ENCODE measurements at regions of chr6 and their contacts with region 1.

Region 1: GRCh38 chr6:7107578-7108195 is at the start of gene RREB1:
- DNase-seq: peak; percentile 54
- H3K4me3 Mint-ChIP-seq: peak within 1 kb of the TSS; percentile 92
- H3K27ac Mint-ChIP-seq: peak within 1 kb of the TSS; percentile 95
- H3K4me1 Mint-ChIP-seq: peaks cover 43% of the 10 kb centered on the region
- H3K27me3 Mint-ChIP-seq: peaks cover 2% of the 10 kb centered on the region
- total RNA-seq, gene RREB1: 23.1 and 23.6 TPM in 2 replicates

Region 2: DNA sequence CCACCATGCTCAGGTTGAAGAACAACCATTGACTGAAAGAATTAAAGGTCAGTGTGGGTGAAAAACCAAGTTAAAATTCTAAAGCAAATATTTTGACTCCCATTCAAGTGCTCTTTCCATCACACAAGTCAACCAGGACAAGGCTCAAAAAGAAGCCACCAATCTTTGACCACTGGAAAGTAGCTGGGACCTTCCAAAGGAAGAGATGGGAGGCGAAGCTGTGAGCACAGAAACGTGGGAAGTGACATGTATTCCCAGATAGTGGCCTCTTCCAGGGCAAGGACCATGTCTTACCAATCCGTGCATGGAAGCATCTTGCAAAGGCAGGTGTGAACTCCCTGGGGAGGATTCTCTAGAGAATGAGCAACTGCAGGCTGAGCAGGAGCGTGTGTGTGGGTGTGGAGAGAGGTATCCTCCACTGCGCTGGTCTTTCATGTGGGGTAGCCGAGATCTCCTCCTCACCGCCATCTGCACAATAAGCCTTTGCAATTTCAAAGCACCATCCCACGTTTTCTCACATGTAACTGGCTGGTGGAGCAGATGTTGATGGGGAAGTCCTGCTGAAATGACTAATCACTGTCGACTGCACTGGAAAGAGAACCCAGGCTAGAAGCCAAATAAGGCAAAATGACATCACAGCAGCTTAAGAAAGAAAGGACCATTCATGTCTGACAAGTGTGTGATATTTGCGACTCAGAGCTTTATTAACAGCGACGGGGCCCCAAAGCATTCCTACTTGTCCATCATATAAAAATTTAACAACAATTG is 189.3 kb before region 1 on chr6:
- intact Hi-C with region 1: loop called (anchors 1 kb)
- DNase-seq: peak; percentile 24
- H3K4me3 Mint-ChIP-seq: no peak overlapping the region
- H3K27ac Mint-ChIP-seq: peak overlapping the region; percentile 16
- H3K4me1 Mint-ChIP-seq: peaks cover 24% of the 10 kb centered on the region
- H3K27me3 Mint-ChIP-seq: peaks cover 31% of the 10 kb centered on the region

Region 3: GRCh38 chr6:7051233-7052114 is 56.2 kb before region 1 on chr6:
- intact Hi-C with region 1: loop called (anchors 5 kb)
- DNase-seq: no peak
- H3K4me3 Mint-ChIP-seq: no peak overlapping the region
- H3K27ac Mint-ChIP-seq: no peak overlapping the region
- H3K4me1 Mint-ChIP-seq: peaks cover 3% of the 10 kb centered on the region
- H3K27me3 Mint-ChIP-seq: peaks cover 53% of the 10 kb centered on the region

Region 4: DNA sequence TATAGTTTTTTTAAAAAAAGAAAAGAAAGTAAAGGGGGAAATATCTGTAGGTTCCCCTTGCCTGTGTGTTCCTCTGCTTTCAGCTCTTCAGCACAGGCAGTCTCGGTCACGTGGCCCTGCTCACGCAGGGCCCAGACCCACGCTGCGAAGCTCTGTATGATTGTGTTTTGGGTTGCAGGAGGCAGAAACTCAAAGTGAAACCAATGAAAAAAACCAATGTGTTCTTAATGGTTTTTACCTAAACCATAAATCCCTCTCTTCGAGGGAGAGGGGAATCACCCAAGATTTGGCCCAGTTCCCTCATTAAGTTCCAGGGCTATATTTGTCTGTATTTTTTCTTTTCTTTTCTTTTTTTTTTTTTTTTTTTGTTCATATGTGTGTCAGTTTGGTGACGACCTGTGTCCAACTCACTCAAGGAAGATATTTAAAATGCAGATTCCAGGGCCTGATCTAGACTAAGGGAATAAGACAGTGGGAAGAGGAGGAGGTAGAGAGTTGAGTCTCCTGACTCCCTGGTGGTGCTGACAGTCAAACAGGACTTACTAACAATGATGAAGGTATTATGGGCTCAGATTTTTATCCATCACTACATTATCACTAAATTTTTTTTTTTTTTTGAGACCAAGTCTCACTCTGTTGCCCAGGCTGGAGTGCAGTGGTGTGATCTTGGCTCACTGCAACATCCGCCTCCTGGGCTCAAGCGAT is 33.7 kb before region 1 on chr6:
- intact Hi-C with region 1: loop called (anchors 1 kb)
- DNase-seq: peak; percentile 57
- H3K4me3 Mint-ChIP-seq: no peak overlapping the region
- H3K27ac Mint-ChIP-seq: no peak overlapping the region
- H3K4me1 Mint-ChIP-seq: peaks cover 17% of the 10 kb centered on the region
- H3K27me3 Mint-ChIP-seq: peaks cover 60% of the 10 kb centered on the region

Region 5: DNA sequence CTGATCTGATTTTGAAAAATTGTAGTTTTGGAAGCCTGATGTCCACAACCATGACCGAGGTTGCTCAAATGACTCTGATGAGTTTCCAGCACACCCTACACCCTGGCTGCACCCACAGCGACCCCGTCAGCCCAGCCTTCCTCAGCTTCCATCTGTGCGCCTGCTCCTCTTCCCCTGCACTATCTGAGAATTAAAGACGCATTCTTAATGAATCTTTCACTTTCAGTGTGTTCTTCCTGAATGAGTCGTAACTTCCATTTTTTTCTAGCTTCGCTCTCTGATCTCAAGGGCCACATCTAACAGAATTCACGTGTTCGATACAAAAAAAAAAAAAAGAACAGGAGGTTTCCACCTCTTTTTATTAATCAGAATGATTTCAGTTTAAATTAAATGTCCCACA is 21.2 kb before region 1 on chr6:
- intact Hi-C with region 1: loop called (anchors 1 kb)
- DNase-seq: no peak
- H3K4me3 Mint-ChIP-seq: peak overlapping the region; percentile 73
- H3K27ac Mint-ChIP-seq: no peak overlapping the region
- H3K4me1 Mint-ChIP-seq: peaks cover 28% of the 10 kb centered on the region
- H3K27me3 Mint-ChIP-seq: peaks cover 41% of the 10 kb centered on the region

Region 6: DNA sequence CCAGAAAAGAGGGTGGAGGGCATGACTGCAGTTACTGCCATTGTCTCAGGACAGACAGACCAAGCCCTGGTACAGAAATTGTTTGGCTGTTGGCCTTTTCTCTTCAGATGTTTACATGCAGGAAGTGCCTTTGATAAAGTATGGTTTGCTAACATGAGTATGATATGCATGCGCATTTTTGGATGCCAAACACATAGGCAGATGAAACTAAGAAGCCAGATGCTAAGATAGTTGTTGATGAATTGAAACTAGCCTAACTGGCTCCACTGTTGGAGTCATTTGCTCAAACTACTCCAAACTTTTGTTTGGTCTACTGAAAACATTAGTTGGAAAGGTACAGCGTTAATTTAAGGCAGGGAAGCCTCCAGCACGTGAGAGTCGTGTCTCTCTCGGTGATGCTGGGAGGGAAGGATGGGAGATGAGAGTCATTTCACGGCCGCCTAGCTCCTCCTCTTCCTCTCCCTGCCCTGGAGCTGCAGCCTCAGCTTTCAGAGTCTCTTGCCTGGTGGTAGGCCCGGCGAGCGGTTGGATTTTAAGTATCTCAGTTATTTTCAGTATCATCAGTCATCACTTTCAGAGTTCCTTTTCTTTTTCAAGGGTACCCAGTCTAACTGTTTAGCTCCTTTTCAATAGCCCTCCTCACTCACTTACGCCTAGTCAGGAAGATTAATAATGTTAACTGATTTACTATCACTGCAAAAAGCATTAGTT is 29.8 kb after region 1 on chr6:
- intact Hi-C with region 1: loop called (anchors 1 kb)
- DNase-seq: peak; percentile 66
- H3K4me3 Mint-ChIP-seq: peak overlapping the region; percentile 84
- H3K27ac Mint-ChIP-seq: peak overlapping the region; percentile 99
- H3K4me1 Mint-ChIP-seq: peaks cover 63% of the 10 kb centered on the region
- H3K27me3 Mint-ChIP-seq: no peaks in the 10 kb centered on the region

Region 7: DNA sequence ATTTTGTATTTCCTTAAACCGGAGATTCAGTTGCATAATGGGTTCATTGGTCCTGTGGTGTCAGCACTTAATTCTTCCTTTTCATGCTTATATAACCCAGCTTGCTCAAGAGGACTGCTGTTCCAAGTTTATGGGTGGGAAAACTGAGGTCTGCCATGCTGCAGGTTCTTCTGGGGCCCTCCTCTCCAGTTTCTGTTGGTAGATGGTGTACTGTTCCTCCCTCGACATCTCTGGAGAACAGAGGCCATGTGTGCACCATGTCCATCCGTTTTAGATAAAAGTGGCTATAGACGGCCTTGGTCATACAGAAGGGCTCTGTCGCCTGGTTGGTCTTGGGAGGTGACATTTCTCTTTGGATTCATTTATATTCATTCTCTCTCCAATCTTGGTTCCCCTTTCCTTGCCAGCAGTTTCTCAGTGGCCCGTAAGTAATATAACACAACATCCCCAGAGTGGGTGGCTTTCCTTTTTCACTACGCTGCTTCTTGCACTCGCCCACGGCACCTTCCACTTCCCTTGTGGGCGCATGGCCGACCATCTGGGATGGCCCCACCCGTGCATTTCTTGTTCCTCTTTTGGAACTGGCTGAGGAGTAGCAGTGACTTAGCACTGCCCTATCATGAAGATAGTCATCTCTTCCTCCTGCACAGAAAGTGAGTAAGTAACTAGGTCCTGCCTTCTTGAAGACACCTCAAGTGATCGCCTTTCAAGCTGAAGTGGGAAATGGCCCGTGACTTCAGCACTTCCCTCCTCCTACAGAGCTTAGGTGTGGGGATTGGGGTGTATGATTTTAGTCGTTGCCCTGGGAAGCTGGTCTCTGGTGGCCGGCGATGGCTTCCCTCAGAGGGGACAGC is 94.2 kb after region 1 on chr6:
- intact Hi-C with region 1: loop called (anchors 5 kb)
- DNase-seq: no peak
- H3K4me3 Mint-ChIP-seq: no peak overlapping the region
- H3K27ac Mint-ChIP-seq: peak overlapping the region; percentile 68
- H3K4me1 Mint-ChIP-seq: peaks cover 26% of the 10 kb centered on the region
- H3K27me3 Mint-ChIP-seq: no peaks in the 10 kb centered on the region